Naive thymus-derived CD4-positive, alpha-beta T cell (primary cell): ENCODE measurements at regions of chr20 and their contacts with region 1.

Region 1: DNA sequence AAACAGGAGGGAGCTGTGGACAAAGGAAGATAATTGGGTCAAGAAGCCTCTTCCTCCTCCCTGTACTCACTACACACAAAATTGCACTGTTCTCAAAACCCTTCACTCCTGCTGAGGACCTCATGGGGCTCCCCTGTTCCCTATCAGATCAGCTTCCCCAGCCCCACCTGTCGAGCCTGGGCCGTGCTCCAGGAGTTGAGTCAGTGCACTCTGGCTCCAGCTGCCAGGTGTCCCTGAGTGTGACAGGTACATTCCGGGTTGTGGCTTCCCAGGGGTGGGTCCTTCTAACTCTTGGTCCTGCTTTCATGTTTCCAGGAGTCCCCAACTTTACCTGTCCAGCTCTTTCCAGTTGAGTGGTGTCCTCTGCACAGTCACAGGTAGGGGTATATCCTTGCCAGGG is 8.4 kb downstream of the RAB5IF start:
- DNase-seq: no peak
- ATAC-seq: no peak
- H3K4me3 ChIP-seq: no peak overlapping the region
- H3K4me3 Mint-ChIP-seq: no peak overlapping the region
- H3K27ac ChIP-seq: peak overlapping the region; percentile 21
- H3K27ac Mint-ChIP-seq: peak overlapping the region in 5 of 9 donors; percentile 14 to 85 (median 33)
- H3K4me1 ChIP-seq: no peaks in the 10 kb centered on the region
- H3K4me1 Mint-ChIP-seq: peaks cover 5 to 28% (median 18%) of the 10 kb centered on the region in 7 donors
- H3K27me3 ChIP-seq: no peaks in the 10 kb centered on the region
- H3K27me3 Mint-ChIP-seq: no peaks in the 10 kb centered on the region

Region 2: GRCh38 chr20:36676701-36677421 is 62.9 kb after region 1 on chr20:
- CTCF ChIA-PET with region 1: no interaction called
- POLR2A ChIA-PET with region 1: no interaction called
- intact Hi-C with region 1: no loop called
- DNase-seq: no peak
- ATAC-seq: no peak
- H3K4me3 ChIP-seq: no peak overlapping the region
- H3K4me3 Mint-ChIP-seq: no peak overlapping the region
- H3K27ac ChIP-seq: no peak overlapping the region
- H3K27ac Mint-ChIP-seq: no peak overlapping the region
- H3K4me1 ChIP-seq: no peaks in the 10 kb centered on the region
- H3K4me1 Mint-ChIP-seq: no peaks in the 10 kb centered on the region
- H3K27me3 ChIP-seq: no peaks in the 10 kb centered on the region
- H3K27me3 Mint-ChIP-seq: no peaks in the 10 kb centered on the region

Region 3: GRCh38 chr20:36745927-36746659 is 132.1 kb after region 1 on chr20 and contains the start of gene NDRG3:
- CTCF ChIA-PET with region 1: interaction called, 4 read pairs
- POLR2A ChIA-PET with region 1: interaction called, 4 read pairs
- intact Hi-C with region 1: loop called in 1 of 2 experiments (anchors 2 kb)
- DNase-seq: peak; percentile 81 to 93 (median 91)
- ATAC-seq: peak; percentile 100
- H3K4me3 ChIP-seq: peak within 1 kb of the TSS; percentile 93
- H3K4me3 Mint-ChIP-seq: peak within 1 kb of the TSS; percentile 85 to 94 (median 90)
- H3K27ac ChIP-seq: peak within 1 kb of the TSS; percentile 70
- H3K27ac Mint-ChIP-seq: peak within 1 kb of the TSS; percentile 83 to 97 (median 88)
- H3K4me1 ChIP-seq: peaks cover 5 to 7% of the 10 kb centered on the region in 2 donors
- H3K4me1 Mint-ChIP-seq: peaks cover 20 to 41% (median 29%) of the 10 kb centered on the region in 7 donors
- H3K27me3 ChIP-seq: no peaks in the 10 kb centered on the region
- H3K27me3 Mint-ChIP-seq: no peaks in the 10 kb centered on the region
- total RNA-seq, gene NDRG3: 20.8 to 30.6 (median 28.9) TPM

Region 4: DNA sequence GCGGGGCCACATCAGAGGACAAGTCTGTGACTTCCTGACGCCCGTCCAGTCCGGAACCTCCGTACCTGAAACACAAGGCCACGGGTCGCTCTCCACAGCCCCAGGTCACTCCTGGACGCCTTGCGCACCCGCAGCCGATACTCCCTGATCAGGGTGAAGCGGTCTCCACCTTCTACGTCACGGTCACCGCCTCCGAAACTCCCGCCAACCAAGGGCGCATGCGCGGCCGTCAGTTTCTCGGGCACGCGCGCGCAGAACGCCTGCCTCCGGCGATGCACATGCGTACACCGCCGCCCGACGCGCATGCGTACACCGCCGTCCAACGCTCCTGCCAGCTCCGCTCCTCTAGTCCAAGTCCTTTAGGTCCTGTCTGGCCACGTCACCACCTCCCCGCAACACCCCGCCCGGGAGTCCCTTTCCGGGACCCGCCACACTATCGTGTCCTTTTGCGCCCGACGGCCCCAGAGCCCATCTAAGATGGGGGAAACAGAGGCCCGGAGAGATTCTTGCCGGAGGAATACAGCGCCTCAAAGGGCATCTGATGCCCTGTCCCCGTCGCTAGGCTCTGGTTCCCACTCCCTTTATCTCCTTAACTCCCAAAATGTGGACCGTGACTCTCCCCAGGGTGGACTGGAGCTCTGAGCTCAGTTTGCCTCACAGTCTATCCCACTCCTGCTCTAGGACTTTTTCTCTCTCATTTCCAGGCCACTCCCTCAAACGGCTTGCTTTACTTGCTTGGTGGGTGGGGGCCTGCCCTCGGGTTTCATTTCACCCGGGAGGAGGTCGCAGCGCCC is 159.8 kb after region 1 on chr20 and contains the start of gene DSN1:
- CTCF ChIA-PET with region 1: no interaction called
- POLR2A ChIA-PET with region 1: no interaction called
- intact Hi-C with region 1: loop called in 1 of 2 experiments (anchors 1 kb)
- DNase-seq: peak; percentile 94 to 100 (median 97)
- ATAC-seq: peak; percentile 90
- H3K4me3 ChIP-seq: peak within 1 kb of the TSS; percentile 96
- H3K4me3 Mint-ChIP-seq: peak within 1 kb of the TSS; percentile 83 to 98 (median 95)
- H3K27ac ChIP-seq: peak within 1 kb of the TSS; percentile 93
- H3K27ac Mint-ChIP-seq: peak within 1 kb of the TSS; percentile 90 to 100 (median 97)
- H3K4me1 ChIP-seq: peaks cover 8 to 13% of the 10 kb centered on the region in 2 donors
- H3K4me1 Mint-ChIP-seq: peaks cover 8 to 36% (median 27%) of the 10 kb centered on the region in 7 donors
- H3K27me3 ChIP-seq: no peaks in the 10 kb centered on the region
- H3K27me3 Mint-ChIP-seq: peaks cover 0 to 2% (median 0%) of the 10 kb centered on the region in 5 donors
- total RNA-seq, gene DSN1: 9.2 to 27.5 (median 13.4) TPM

Region 5: DNA sequence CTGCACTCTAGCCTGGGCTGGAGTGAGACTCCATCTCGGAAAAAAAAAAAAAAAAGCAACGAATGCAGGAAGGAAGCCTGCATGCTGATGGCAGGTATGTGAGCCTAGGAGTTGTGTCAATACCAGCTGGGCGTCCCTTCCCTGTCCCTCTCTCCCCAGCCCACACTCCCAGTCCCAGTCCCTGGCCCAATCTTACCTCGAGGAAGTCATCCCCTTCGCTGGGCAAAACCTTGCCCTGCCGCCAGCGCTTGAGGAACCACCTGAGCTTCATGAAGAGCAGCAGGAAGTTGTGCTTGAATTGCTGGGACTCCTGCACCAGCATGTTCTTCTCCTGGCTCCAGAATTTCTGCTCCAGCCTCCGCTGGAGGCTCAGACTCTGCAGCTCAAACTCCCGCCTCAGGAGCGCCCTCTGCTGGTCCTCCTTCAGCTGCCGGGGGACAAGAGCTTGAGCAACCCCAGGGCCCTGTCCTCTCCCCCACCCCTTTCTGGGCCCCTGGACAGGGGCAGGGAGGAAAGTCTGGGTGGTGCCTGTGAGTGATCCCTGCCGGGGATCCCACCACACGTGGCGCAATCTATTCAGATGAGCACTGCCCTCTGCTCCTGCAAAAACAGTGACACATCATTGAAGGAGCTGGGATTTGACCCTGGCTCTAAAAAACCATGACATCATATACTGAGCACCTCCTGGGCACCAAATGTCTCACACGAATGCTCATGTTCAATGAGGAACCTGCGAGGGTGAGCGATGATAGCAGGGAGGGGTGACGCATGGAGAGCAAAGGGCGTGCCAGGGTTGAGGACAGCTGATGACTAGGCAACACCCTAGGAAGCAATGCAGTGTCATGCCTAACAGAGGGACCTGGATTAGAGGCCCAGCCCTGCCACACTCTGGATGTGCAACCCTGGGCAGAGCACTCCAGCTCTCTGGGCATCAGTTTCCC is 194.6 kb after region 1 on chr20:
- CTCF ChIA-PET with region 1: interaction called, 4 read pairs
- POLR2A ChIA-PET with region 1: no interaction called
- intact Hi-C with region 1: loop called in 1 of 2 experiments (anchors 1 kb)
- DNase-seq: peak; percentile 14 to 75 (median 51)
- ATAC-seq: peak; percentile 92
- H3K4me3 ChIP-seq: no peak overlapping the region
- H3K4me3 Mint-ChIP-seq: no peak overlapping the region
- H3K27ac ChIP-seq: no peak overlapping the region
- H3K27ac Mint-ChIP-seq: no peak overlapping the region
- H3K4me1 ChIP-seq: no peaks in the 10 kb centered on the region
- H3K4me1 Mint-ChIP-seq: peaks cover 0 to 3% (median 0%) of the 10 kb centered on the region in 7 donors
- H3K27me3 ChIP-seq: no peaks in the 10 kb centered on the region
- H3K27me3 Mint-ChIP-seq: no peaks in the 10 kb centered on the region

Region 6: GRCh38 chr20:36861875-36862801 is 248.2 kb after region 1 on chr20:
- CTCF ChIA-PET with region 1: no interaction called
- POLR2A ChIA-PET with region 1: no interaction called
- intact Hi-C with region 1: loop called (anchors 5 to 10 kb)
- DNase-seq: no peak
- ATAC-seq: no peak
- H3K4me3 ChIP-seq: no peak overlapping the region
- H3K4me3 Mint-ChIP-seq: peak overlapping the region in 9 of 10 donors; percentile 24 to 81 (median 63)
- H3K27ac ChIP-seq: no peak overlapping the region
- H3K27ac Mint-ChIP-seq: no peak overlapping the region
- H3K4me1 ChIP-seq: peaks cover 0 to 3% of the 10 kb centered on the region in 2 donors
- H3K4me1 Mint-ChIP-seq: peaks cover 5 to 25% (median 15%) of the 10 kb centered on the region in 7 donors
- H3K27me3 ChIP-seq: no peaks in the 10 kb centered on the region
- H3K27me3 Mint-ChIP-seq: peaks cover 0 to 45% (median 8%) of the 10 kb centered on the region in 5 donors

Region 7: DNA sequence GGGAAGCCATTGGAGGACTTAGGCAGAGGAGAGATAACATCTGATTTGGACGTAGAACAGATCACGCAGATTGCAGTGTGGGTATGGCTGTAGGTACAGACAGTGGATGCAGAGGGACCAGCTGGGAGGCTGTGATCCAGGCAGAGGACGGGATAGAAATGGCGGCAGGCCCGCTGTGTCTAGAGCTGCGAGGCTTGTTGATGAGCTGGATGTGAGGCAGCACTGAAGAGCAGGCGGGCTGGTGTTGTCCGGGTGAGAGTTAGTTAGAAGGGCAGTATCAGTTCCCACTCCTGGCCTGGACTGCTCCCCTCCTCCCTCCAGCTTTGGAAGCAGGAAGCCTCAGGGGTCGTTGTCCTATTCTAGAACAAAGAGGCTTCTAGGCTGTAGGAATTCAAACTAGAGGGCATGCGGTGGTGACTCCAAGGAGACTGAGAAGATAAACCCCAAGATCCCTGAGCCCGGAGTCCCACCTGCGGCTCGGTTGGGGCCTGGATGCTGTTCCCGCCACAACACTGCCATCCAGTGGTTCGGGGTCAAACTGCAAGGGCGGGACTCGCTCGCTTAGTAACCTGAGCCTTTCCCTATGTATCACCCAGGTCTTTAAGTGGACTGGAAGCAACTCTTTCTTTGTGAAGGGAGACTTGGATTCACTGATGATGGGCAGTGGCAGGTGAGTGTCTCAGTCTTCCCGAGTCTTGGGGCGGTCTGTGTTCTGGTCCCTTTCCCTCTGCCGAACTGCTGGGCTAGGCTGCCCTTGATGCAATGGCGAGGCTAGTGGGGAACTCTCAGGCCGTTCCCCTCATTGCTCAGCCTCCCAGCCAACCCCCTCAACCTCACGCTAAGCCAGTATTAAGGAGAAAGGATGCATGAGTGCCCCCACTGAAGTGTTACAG is 273.1 kb after region 1 on chr20:
- CTCF ChIA-PET with region 1: interaction called, 3 read pairs
- POLR2A ChIA-PET with region 1: no interaction called
- intact Hi-C with region 1: loop called (anchors 1 kb)
- DNase-seq: peak; percentile 59 to 84 (median 75)
- ATAC-seq: peak; percentile 94
- H3K4me3 ChIP-seq: no peak overlapping the region
- H3K4me3 Mint-ChIP-seq: peak overlapping the region in 7 of 10 donors; percentile 10 to 62 (median 36)
- H3K27ac ChIP-seq: peak overlapping the region; percentile 33
- H3K27ac Mint-ChIP-seq: peak overlapping the region; percentile 2 to 89 (median 73)
- H3K4me1 ChIP-seq: peaks cover 5 to 7% of the 10 kb centered on the region in 2 donors
- H3K4me1 Mint-ChIP-seq: peaks cover 4 to 22% (median 16%) of the 10 kb centered on the region in 7 donors
- H3K27me3 ChIP-seq: no peaks in the 10 kb centered on the region
- H3K27me3 Mint-ChIP-seq: no peaks in the 10 kb centered on the region